Activated CD4-positive, alpha-beta memory T cell treated with anti-CD3 and anti-CD28 coated beads for 36 hours (primary cell): ENCODE measurements at regions of chr2 and their contacts with region 1.

Region 1: GRCh38 chr2:177164584-177165052 is 48.0 kb upstream of the HNRNPA3 start:
- DNase-seq: peak; percentile 86
- H3K4me3 Mint-ChIP-seq: no peak overlapping the region
- H3K27ac Mint-ChIP-seq: no peak overlapping the region
- H3K4me1 Mint-ChIP-seq: peaks cover 16% of the 10 kb centered on the region
- H3K27me3 Mint-ChIP-seq: no peaks in the 10 kb centered on the region

Region 2: GRCh38 chr2:177201919-177202346 is 37.3 kb after region 1 on chr2:
- CTCF ChIA-PET with region 1: interaction called, 33 read pairs
- POLR2A ChIA-PET with region 1: no interaction called
- intact Hi-C with region 1: no loop called
- DNase-seq: no peak
- H3K4me3 Mint-ChIP-seq: no peak overlapping the region
- H3K27ac Mint-ChIP-seq: no peak overlapping the region
- H3K4me1 Mint-ChIP-seq: peaks cover 6% of the 10 kb centered on the region
- H3K27me3 Mint-ChIP-seq: no peaks in the 10 kb centered on the region

Region 3: GRCh38 chr2:177239932-177240630 is 75.5 kb after region 1 on chr2:
- CTCF ChIA-PET with region 1: interaction called, 12 read pairs
- POLR2A ChIA-PET with region 1: interaction called, 3 read pairs
- intact Hi-C with region 1: no loop called
- DNase-seq: peak; percentile 61
- H3K4me3 Mint-ChIP-seq: no peak overlapping the region
- H3K27ac Mint-ChIP-seq: peak overlapping the region; percentile 83
- H3K4me1 Mint-ChIP-seq: peaks cover 82% of the 10 kb centered on the region
- H3K27me3 Mint-ChIP-seq: no peaks in the 10 kb centered on the region

Region 4: DNA sequence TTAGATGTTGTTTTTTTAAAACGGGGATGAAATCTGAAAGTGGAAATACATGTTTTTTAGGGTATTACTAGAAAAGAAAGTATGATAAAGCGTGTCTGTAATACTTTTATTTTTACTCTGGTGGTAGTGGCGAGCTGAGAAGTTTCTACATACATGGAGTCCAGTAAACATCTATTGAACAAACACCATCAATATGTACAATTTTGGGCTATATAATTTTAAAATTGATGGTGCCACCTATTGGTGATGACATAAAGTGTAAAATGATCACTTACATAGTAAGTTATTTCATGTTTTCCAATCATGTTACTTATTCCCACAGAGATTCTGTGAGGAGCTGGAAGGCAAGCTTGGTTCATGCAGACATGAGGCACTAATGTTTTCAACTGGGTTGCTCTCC is 131.4 kb after region 1 on chr2:
- CTCF ChIA-PET with region 1: interaction called, 99 read pairs
- POLR2A ChIA-PET with region 1: no interaction called
- intact Hi-C with region 1: loop called (anchors 1 kb)
- DNase-seq: no peak
- H3K4me3 Mint-ChIP-seq: no peak overlapping the region
- H3K27ac Mint-ChIP-seq: no peak overlapping the region
- H3K4me1 Mint-ChIP-seq: peaks cover 22% of the 10 kb centered on the region
- H3K27me3 Mint-ChIP-seq: no peaks in the 10 kb centered on the region

Region 5: DNA sequence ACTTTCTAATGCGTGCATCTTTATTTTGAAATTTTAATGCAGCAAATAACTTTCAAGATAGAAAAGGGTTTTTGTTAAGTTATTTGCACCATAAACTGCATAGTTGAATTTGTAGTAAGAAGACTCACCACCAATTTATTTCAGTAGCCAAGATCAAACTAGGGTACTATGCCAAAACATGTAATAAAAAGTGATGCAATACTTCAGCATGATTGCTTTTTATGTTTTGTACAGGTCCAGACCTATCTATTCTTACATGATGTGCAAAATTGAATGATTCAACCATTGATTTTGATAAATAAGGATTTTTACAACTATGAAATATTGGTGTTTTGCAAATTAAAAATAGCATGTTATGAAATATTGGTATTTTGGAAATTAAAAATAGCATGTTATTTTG is 254.7 kb after region 1 on chr2:
- CTCF ChIA-PET with region 1: interaction called, 52 read pairs
- POLR2A ChIA-PET with region 1: no interaction called
- intact Hi-C with region 1: loop called (anchors 2 kb)
- DNase-seq: no peak
- H3K4me3 Mint-ChIP-seq: no peak overlapping the region
- H3K27ac Mint-ChIP-seq: no peak overlapping the region
- H3K4me1 Mint-ChIP-seq: peaks cover 33% of the 10 kb centered on the region
- H3K27me3 Mint-ChIP-seq: no peaks in the 10 kb centered on the region

Region 6: GRCh38 chr2:177724398-177725287 is 560.0 kb after region 1 on chr2:
- CTCF ChIA-PET with region 1: interaction called, 17 read pairs
- POLR2A ChIA-PET with region 1: no interaction called
- intact Hi-C with region 1: loop called (anchors 1 kb)
- DNase-seq: peak; percentile 63
- H3K4me3 Mint-ChIP-seq: no peak overlapping the region
- H3K27ac Mint-ChIP-seq: no peak overlapping the region
- H3K4me1 Mint-ChIP-seq: no peaks in the 10 kb centered on the region
- H3K27me3 Mint-ChIP-seq: peaks cover 16% of the 10 kb centered on the region